ENCODE measurements at regions of chr1 and their contacts with region 1.

Region 1: DNA sequence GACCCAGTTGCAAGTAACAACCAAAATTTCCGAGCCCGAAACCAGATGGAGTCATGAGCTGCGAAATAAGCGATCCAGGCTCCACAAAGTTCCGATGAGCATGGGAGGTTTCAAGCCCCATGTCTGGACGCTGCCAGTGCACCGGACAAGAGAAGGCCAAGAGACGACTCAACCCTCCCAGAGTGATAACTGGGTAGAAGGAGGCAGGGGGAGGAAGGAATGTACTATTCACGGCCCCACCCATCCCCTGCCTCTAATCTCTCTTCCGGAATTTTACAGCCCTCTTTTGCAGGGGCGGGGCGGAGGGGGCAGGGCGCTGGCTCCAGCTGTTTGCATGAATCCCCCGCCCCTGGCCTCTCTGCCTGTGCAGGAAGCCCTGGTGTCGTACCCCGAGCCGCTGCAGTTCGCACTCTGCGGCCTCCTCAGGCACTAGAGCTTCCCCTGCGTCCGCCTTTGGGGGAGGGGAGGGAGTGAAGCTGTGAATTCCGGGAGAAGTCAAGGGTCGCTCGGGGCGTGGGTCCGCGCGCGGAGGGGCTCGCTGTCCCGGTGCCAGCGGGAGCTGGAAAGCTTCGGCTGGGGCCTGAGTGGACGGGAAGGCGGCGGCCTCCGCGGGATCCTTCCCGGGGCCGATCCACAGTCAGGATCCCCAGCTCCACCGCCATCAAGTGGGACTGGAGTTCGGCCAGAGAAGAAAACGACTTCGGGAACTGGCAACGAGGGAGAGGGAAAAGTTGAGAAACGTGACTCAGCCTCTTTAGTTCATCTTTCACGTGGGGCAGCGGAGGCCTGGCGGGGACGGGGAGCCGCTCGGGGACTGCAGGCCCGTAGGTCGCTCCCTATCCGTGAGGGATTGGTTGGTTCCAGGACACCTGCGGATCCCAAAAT is 6.3 kb upstream of the PTP4A2 start:
- DNase-seq: peak; percentile 49 to 92 (median 85)
- ATAC-seq: peak; percentile 61
- H3K4me3 ChIP-seq: peak overlapping the region; percentile 36 to 65
- H3K4me3 Mint-ChIP-seq: peak overlapping the region; percentile 92
- H3K27ac ChIP-seq: peak overlapping the region; percentile 41 to 78
- H3K27ac Mint-ChIP-seq: peak overlapping the region; percentile 97
- H3K4me1 ChIP-seq: peaks cover 47% of the 10 kb centered on the region
- H3K4me1 Mint-ChIP-seq: peaks cover 50% of the 10 kb centered on the region
- H3K27me3 ChIP-seq: no peaks in the 10 kb centered on the region
- H3K27me3 Mint-ChIP-seq: no peaks in the 10 kb centered on the region
- CTCF ChIP-seq: no peak

Region 2: GRCh38 chr1:29984538-29985357 is 1959.7 kb before region 1 on chr1:
- CTCF ChIA-PET with region 1: no interaction called
- POLR2A ChIA-PET with region 1: no interaction called
- intact Hi-C with region 1: no loop called
- DNase-seq: no peak
- ATAC-seq: no peak
- H3K4me3 ChIP-seq: no peak overlapping the region
- H3K4me3 Mint-ChIP-seq: no peak overlapping the region
- H3K27ac ChIP-seq: no peak overlapping the region
- H3K27ac Mint-ChIP-seq: no peak overlapping the region
- H3K4me1 ChIP-seq: no peaks in the 10 kb centered on the region
- H3K4me1 Mint-ChIP-seq: no peaks in the 10 kb centered on the region
- H3K27me3 ChIP-seq: no peaks in the 10 kb centered on the region
- H3K27me3 Mint-ChIP-seq: peaks cover 18% of the 10 kb centered on the region
- CTCF ChIP-seq: no peak

Region 3: DNA sequence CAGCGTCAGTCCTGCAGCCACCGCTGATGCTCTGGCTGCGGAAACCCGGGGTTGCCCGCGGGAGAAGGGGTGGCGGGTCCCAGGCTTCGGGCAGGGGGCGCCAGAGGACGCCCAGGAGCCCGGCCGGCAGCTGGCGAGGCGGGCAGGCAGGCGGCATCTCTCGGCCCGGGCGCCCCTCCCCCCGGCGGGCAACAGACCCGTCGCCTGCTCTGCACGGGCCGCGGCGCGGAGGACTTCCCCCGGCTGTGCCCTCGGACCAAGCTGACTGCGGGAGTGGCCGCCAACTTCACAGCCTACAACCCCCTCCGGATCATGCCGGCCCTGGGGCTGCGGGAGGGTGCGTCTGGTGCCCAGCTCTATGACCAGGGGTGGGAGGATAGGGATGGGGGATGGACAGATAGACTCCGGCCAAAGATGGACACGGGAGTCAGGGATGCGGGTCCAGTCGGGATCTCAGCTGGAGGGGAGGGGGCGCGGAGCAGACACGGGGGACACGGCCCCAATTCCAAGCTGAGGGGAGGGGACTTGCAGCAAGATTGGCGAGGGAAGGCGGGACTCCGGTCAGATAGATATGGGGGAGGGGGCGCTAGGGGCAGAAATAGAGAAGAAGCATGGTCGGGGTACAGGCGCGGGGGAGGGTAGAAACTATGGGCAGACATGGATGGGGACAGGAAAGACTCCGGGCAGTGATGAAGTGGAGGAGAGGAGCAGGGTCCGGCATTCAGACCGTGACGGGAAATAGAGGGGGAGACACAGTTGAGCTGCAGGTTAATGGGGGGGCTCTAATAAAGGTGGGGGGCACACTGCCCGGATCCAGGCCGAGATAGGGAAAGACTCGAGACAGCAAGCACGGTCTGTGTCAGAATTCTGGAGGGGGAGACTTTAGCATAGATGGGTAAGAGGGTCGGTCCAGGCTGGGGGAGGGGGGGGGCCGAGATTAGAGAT is 181.4 kb before region 1 on chr1:
- CTCF ChIA-PET with region 1: no interaction called
- POLR2A ChIA-PET with region 1: interaction called, 3 read pairs
- intact Hi-C with region 1: loop called in 1 of 2 experiments (anchors 5 kb)
- DNase-seq: peak; percentile 39 to 86 (median 69)
- ATAC-seq: peak; percentile 43
- H3K4me3 ChIP-seq: peak overlapping the region; percentile 41 to 57
- H3K4me3 Mint-ChIP-seq: peak overlapping the region; percentile 80
- H3K27ac ChIP-seq: no peak overlapping the region
- H3K27ac Mint-ChIP-seq: no peak overlapping the region
- H3K4me1 ChIP-seq: peaks cover 40% of the 10 kb centered on the region
- H3K4me1 Mint-ChIP-seq: peaks cover 29% of the 10 kb centered on the region
- H3K27me3 ChIP-seq: peaks cover 11 to 14% of the 10 kb centered on the region in 2 experiments
- H3K27me3 Mint-ChIP-seq: peaks cover 11% of the 10 kb centered on the region
- CTCF ChIP-seq: peak; percentile 45

Region 4: DNA sequence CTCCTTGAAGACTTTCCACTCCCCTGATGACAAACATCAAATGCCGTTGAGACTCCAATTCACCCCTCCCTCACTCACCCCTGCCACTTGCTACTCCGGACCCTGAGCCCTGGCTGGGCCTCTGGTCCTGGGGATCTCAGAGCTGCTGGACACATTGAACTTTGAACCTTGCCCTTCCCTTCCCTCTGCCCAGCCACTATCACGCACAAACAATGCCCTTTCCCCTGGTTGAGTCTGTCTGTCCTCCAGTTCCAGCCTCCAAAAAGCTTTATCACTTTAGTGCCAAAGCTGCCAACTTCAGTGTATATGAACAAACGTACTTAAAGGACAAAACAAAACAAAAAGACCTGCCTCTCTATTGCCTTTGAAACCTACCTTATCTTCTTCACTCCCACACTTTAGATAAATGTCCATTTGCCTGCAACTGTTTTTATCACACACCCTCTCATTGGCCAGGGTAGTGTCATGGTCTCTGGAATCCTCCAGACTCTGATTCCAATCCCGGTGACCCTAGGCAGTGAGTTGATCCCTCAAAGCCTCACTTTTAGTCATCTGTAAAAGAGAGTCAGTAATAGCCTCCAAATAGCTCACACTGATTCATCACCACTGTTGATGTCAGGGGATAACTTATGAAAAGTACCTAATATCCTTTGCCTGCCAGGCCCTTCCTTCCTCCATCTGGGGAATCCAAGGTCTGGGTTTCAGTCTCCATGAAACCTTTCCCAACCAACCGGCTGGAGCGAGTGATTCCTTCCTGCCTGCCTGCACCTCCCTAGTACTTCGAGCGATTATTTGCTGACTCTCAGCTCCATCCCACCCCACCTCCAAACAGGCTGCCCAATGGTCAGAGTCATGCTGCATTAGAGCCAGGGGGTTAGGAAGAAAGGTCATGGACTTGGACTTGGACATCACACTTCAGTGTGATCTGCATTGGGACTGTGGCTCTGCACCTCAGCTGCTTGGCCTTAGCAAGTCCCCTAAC is 112.8 kb before region 1 on chr1:
- CTCF ChIA-PET with region 1: interaction called, 4 read pairs
- POLR2A ChIA-PET with region 1: interaction called, 10 read pairs
- intact Hi-C with region 1: loop called in 1 of 2 experiments (anchors 5 kb)
- DNase-seq: peak in 1 of 9 experiments; percentile 34
- ATAC-seq: no peak
- H3K4me3 ChIP-seq: no peak overlapping the region
- H3K4me3 Mint-ChIP-seq: no peak overlapping the region
- H3K27ac ChIP-seq: no peak overlapping the region
- H3K27ac Mint-ChIP-seq: no peak overlapping the region
- H3K4me1 ChIP-seq: peaks cover 28% of the 10 kb centered on the region
- H3K4me1 Mint-ChIP-seq: peaks cover 32% of the 10 kb centered on the region
- H3K27me3 ChIP-seq: no peaks in the 10 kb centered on the region
- H3K27me3 Mint-ChIP-seq: no peaks in the 10 kb centered on the region
- CTCF ChIP-seq: no peak

Region 5: GRCh38 chr1:31872658-31873636 is 71.5 kb before region 1 on chr1:
- CTCF ChIA-PET with region 1: no interaction called
- POLR2A ChIA-PET with region 1: no interaction called
- intact Hi-C with region 1: no loop called
- DNase-seq: peak in 3 of 9 experiments; percentile 51 to 83 (median 70)
- ATAC-seq: peak; percentile 75
- H3K4me3 ChIP-seq: peak overlapping the region in 1 of 2 experiments; percentile 8
- H3K4me3 Mint-ChIP-seq: peak overlapping the region; percentile 72
- H3K27ac ChIP-seq: peak overlapping the region; percentile 29 to 76
- H3K27ac Mint-ChIP-seq: peak overlapping the region; percentile 90
- H3K4me1 ChIP-seq: peaks cover 19% of the 10 kb centered on the region
- H3K4me1 Mint-ChIP-seq: peaks cover 41% of the 10 kb centered on the region
- H3K27me3 ChIP-seq: no peaks in the 10 kb centered on the region
- H3K27me3 Mint-ChIP-seq: no peaks in the 10 kb centered on the region
- CTCF ChIP-seq: no peak

Region 6: DNA sequence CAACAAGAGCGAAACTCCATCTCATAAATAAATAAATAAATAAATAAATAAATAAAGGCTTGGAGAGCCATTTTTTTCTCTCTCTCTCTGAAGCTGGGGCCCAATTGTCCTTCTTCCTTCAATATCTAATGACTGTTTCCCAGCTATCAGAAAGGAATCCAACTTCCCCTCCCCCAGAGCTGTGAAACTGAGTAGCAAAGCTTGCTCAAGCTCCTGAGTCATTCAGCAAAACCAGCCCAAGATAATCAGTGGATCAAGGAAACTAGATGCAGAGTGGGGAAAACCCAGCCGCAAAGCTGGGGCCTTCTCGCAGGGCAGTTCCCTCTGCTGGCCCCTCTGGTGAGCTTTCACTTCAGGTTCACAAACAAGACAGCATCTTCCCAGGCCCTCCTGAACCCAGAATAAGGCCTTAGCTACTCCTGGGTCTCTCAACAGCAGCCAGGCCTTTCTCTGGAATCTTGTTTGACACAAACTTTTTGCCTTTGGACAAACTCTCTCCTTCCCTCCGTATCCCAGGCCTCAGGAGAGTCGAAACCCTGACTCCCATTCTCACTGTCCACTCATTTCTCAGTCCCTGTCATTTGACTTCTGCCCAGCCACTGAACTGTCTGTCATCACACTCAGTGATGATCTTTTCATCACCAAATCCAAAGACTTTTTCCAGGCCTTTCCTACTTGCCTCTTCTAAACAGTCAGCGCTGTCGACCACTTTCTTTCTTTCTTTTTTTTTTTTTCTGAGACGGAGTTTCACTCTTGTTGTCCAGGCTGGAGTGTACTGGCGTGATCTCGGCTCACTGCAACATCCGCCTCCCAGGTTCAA is 11.7 kb after region 1 on chr1:
- CTCF ChIA-PET with region 1: interaction called, 349 read pairs
- POLR2A ChIA-PET with region 1: interaction called, 29 read pairs
- intact Hi-C with region 1: loop called (anchors 2 kb)
- DNase-seq: peak; percentile 42 to 93 (median 72)
- ATAC-seq: peak; percentile 80
- H3K4me3 ChIP-seq: no peak overlapping the region
- H3K4me3 Mint-ChIP-seq: peak overlapping the region; percentile 42
- H3K27ac ChIP-seq: peak overlapping the region in 1 of 2 experiments; percentile 58
- H3K27ac Mint-ChIP-seq: peak overlapping the region; percentile 58
- H3K4me1 ChIP-seq: peaks cover 22% of the 10 kb centered on the region
- H3K4me1 Mint-ChIP-seq: peaks cover 43% of the 10 kb centered on the region
- H3K27me3 ChIP-seq: no peaks in the 10 kb centered on the region
- H3K27me3 Mint-ChIP-seq: no peaks in the 10 kb centered on the region
- CTCF ChIP-seq: no peak

Region 7: GRCh38 chr1:32247983-32248889 is 303.8 kb after region 1 on chr1:
- CTCF ChIA-PET with region 1: no interaction called
- POLR2A ChIA-PET with region 1: no interaction called
- intact Hi-C with region 1: loop called in 1 of 2 experiments (anchors 5 kb)
- DNase-seq: peak; percentile 51 to 84 (median 76)
- ATAC-seq: peak; percentile 5
- H3K4me3 ChIP-seq: peak overlapping the region; percentile 21 to 28
- H3K4me3 Mint-ChIP-seq: peak overlapping the region; percentile 66
- H3K27ac ChIP-seq: peak overlapping the region; percentile 40 to 93
- H3K27ac Mint-ChIP-seq: peak overlapping the region; percentile 99
- H3K4me1 ChIP-seq: peaks cover 42% of the 10 kb centered on the region
- H3K4me1 Mint-ChIP-seq: peaks cover 44% of the 10 kb centered on the region
- H3K27me3 ChIP-seq: no peaks in the 10 kb centered on the region
- H3K27me3 Mint-ChIP-seq: no peaks in the 10 kb centered on the region
- CTCF ChIP-seq: peak; percentile 86

Measured in CD8-positive, alpha-beta T cell (primary cell).